ENCODE measurements at regions of chr17 and their contacts with region 1.

Region 1: DNA sequence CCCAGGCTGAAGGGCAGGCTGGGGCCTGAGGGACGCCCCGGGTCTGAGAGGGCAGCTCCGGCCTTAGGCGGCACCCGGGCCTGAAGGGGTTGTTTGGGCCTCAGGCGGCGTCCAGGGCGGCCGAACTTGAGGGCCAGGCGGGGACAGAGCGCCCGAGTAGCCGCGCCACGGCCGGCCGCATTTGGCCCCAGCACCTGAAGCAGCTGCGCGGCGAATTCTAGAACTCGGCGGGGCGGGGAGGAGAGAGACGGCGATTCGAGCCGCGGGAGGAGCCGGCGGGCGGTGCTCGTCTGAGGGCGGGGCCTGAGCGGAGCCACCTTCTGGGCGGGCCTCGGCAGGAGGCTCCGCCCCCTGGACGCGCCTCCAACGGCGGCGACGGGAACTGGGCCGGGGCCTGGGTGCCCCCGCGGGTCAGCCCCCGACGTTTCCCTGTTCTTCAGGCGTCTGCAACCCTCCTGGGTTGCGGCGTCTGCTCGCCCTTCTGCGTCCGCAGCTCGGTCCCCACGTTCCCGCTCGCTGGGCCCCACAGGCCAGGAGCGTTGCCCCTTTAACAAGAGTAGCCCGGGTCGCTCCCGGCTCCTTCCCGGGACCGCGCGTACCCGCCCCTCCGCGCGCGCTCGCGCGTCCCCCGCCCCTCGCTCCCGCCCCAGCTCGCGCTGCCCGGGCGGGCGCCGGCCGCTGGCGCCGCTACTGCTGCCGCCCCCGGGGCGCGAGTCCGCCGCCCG is at the starts of genes INCA1 and KIF1C:
- DNase-seq: peak; percentile 98

Region 2: DNA sequence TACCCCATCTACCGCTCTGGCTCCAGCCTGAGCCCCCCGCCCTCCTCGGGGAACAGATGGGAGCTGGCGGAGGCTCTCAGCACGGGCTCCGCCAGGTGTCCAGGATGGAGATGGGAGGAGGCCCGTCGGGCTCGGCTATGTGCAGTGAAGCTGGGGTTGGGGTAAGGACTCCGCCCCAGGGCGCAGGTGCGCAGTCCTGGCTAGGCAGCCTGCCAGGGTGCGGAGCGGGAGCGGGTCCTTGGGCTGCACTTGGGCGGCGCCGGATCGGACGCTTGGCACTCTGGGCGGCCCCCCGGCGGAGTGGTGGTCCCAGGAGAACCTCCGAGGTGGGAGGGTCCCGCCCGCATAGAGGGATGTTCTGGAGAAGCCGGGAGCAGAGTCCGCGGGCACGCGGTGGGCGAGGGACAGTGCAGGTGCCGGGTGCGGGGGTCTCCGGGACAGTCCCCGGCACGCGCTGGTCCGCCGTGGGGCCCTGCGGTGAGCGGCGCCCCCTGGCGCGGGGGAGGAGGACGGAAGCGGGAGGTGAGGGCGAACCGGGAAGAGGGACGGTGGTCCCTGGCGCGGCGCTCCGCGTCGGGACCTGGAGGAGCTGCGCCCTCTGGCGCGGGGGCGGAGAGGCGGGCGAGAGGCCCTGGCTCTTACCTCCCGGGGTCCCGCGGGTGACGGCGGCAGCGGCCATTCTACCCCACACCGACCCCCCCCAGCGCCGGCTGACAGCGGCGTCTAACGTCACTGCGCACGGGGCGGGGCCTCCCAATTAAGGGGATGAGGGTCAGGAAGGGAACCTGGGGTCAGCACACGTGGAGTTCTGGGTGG is 10.3 kb before region 1 on chr17 and contains the start of gene CAMTA2:
- CTCF ChIA-PET with region 1: no interaction called
- POLR2A ChIA-PET with region 1: interaction called, 34 read pairs
- DNase-seq: peak; percentile 79

Measured in HEK293T (cell line).